Right ventricle myocardium superior (tissue), 1 donor: ENCODE measurements at regions of chr11 and their contacts with region 1.

Region 1: DNA sequence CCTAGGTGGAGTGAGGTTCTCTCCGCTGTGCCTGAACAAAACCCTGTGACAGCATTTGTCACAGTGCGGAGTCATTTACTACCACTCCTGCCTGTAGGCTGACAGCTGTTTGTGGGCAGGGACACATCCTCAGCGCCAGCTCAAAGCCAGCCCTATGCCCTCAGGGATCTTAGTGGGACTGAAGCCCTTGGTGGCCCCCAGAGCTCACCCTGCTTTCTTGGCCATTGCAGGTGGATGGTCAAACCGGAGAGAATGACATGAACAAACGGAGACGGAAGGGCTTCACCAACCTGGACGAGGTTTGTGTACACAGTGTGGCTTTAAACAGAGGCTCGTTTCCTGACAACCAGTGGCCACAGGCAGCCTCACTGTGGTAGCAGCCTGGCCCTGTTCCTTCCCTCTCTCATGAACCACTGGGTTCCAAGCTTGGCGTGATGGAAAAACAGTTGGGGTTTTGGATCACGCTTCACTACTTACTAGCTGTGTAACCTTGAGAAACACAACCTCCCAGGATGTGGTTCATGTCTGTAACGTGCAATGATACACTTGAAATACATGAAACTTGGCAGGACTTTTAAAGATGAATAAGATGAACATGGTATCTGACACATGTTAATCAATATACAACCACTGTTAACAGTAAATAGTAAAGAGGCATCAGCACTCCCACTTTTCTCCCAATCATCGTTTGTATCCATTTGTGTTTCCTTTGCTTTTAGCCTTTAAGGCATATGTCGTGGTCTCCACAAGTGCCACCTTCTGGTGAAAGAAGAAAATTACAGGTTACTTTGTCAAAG is 125.8 kb downstream of the MICAL2 start:
- DNase-seq: no peak
- ATAC-seq: peak; percentile 63

Region 2: GRCh38 chr11:12087075-12088004 is 148.8 kb before region 1 on chr11:
- intact Hi-C with region 1: loop called (anchors 5 kb)
- DNase-seq: peak; percentile 50
- ATAC-seq: peak; percentile 16

Region 3: GRCh38 chr11:12516387-12517105 is 280.4 kb after region 1 on chr11:
- intact Hi-C with region 1: no loop called
- DNase-seq: peak; percentile 53
- ATAC-seq: peak; percentile 60